HepG2 (cell line): ENCODE measurements at regions of chr21 and their contacts with region 1.

Region 1: DNA sequence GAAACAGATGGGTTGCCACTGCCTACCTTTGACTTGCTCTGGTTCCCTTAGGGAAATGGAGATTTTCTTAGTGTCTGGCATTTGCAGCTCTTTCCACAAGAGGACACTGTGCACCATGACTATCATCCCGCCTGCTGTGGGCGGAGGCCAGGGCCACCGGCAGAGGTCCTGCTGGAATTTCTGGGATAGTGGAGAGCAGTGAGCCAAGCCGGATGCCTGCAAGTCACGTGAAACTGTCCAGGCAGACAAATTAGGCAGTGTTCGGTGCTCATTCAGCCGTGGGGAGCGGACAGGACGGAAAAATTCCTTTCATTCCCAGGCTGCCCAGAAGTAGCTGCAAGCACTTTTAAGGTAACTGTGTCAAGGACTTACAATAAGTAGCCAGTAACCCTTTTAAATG is 43.4 kb downstream of the IGSF5 start:
- DNase-seq: peak; percentile 71
- ATAC-seq: peak; percentile 100
- H3K4me3 ChIP-seq: no peak overlapping the region
- H3K27ac ChIP-seq: no peak overlapping the region
- H3K4me1 ChIP-seq: no peaks in the 10 kb centered on the region
- H3K27me3 ChIP-seq: no peaks in the 10 kb centered on the region
- CTCF ChIP-seq: peak; percentile 88
- EP300 ChIP-seq: no peak
- POLR2A ChIP-seq: no peak
- RAD21 ChIP-seq: peak; percentile 79

Region 2: DNA sequence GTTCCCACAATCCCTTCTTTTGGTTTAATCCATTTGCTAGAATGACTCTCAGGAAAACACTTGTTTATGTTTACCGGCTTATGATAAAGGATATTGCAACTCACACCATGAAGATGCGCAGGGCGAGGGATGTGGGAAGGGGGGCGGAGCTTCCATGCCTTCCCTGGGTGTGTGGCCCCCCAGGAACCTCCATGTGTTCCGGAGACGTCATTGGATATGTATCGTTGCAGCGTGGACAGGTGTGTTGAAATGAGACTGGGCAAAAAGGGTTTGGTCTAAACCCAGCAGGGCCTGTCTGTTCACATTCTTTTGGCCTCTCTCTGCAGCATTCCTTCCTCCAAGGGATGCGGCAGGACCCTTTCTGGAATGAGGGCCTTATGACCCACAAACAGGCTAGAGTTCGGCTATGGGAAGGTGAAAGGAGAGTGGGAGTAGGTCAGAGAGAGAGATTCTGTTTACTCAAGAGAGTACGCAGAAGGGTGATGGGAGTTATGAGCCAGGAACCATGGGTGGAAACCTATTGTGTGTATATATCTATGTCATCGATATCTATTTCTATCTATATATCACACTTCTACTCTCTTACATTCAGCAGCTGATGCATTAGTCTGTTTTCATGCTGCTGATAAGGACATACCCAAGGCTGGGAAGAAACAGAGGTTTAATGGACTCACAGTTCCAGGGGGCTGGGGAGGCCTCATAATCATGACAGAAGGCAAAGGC is 50.7 kb before region 1 on chr21:
- CTCF ChIA-PET with region 1: no interaction called
- POLR2A ChIA-PET with region 1: no interaction called
- in situ Hi-C with region 1: no loop called
- intact Hi-C with region 1: no loop called
- DNase-seq: no peak
- ATAC-seq: no peak
- H3K4me3 ChIP-seq: no peak overlapping the region
- H3K27ac ChIP-seq: no peak overlapping the region
- H3K4me1 ChIP-seq: no peaks in the 10 kb centered on the region
- H3K27me3 ChIP-seq: 0 out of 5 replicates have a peak, but pooled peaks cover 0 to 3% of the 10 kb centered on the region in 2 experiments
- CTCF ChIP-seq: no peak
- EP300 ChIP-seq: no peak
- POLR2A ChIP-seq: no peak
- RAD21 ChIP-seq: no peak

Region 3: GRCh38 chr21:39863111-39863510 is 74.7 kb after region 1 on chr21:
- CTCF ChIA-PET with region 1: no interaction called
- POLR2A ChIA-PET with region 1: no interaction called
- in situ Hi-C with region 1: no loop called
- intact Hi-C with region 1: no loop called
- DNase-seq: no peak
- ATAC-seq: no peak
- H3K4me3 ChIP-seq: no peak overlapping the region
- H3K27ac ChIP-seq: no peak overlapping the region
- H3K4me1 ChIP-seq: no peaks in the 10 kb centered on the region
- H3K27me3 ChIP-seq: no peaks in the 10 kb centered on the region
- CTCF ChIP-seq: no peak
- EP300 ChIP-seq: no peak
- POLR2A ChIP-seq: no peak
- RAD21 ChIP-seq: no peak

Region 4: DNA sequence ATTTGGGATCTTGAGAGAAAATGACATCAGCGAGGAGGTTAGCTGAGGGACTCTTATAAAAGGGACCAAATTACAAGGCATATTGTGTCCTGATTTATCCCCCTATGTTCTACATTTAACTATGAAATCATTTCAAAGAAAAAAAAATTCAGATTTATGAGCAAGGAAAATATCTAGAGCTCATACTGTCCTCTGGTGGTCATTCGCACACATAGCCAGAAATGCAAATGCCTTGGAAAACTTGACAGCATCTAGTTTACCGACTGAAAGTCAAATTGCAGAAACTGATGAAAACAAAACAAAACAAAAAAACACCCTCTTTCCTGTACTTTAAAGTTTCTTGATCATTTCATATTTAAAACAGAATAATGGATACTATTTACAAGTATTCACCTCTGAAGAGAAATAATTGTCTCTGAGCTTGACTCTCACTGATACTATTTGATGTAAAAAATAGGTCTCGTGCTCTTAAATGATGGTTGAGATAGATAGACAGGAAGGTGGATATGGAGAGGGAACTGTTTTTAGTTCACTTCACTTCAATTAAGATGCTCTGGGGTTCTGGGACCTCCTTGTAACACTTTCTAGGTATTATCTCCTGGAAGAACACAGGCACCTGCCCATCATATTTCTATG is 332.7 kb after region 1 on chr21:
- CTCF ChIA-PET with region 1: interaction called, 6 read pairs
- POLR2A ChIA-PET with region 1: no interaction called
- in situ Hi-C with region 1: loop called (anchors 25 kb)
- intact Hi-C with region 1: loop called (anchors 1 kb)
- DNase-seq: peak; percentile 2
- ATAC-seq: no peak
- H3K4me3 ChIP-seq: no peak overlapping the region
- H3K27ac ChIP-seq: no peak overlapping the region
- H3K4me1 ChIP-seq: no peaks in the 10 kb centered on the region
- H3K27me3 ChIP-seq: no peaks in the 10 kb centered on the region
- CTCF ChIP-seq: peak; percentile 56
- EP300 ChIP-seq: no peak
- POLR2A ChIP-seq: no peak
- RAD21 ChIP-seq: 0 out of 2 replicates have a peak, but pooled peaks have one; percentile 13